IMR-90 (cell line): ENCODE measurements at regions of chr13 and their contacts with region 1.

Region 1: DNA sequence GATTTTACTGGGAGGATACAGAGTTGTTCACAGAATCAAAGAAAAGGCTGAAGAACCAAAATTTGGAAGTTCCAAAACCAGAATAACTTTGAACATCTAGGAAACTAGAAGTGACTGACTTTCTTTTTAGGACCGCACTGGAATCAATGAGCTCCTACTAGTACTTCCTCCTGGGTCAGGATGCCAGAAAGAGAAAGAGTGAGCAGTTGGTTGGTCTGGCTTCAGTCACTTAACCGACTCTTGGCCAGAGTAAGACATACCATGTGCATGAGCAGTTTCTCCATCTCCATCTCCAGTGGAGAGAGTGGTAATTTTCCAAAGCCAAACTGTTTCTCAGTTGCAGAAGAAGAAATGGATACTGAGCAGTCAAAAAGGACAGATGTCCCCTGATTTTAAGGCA is 27.1 kb upstream of the MTUS2 start:
- DNase-seq: peak; percentile 79
- ATAC-seq: peak; percentile 77
- H3K4me3 ChIP-seq: no peak overlapping the region
- H3K27ac ChIP-seq: no peak overlapping the region
- H3K4me1 ChIP-seq: no peaks in the 10 kb centered on the region
- H3K27me3 ChIP-seq: peaks cover 23% of the 10 kb centered on the region
- CTCF ChIP-seq: no peak
- POLR2A ChIP-seq: no peak
- RAD21 ChIP-seq: no peak

Region 2: DNA sequence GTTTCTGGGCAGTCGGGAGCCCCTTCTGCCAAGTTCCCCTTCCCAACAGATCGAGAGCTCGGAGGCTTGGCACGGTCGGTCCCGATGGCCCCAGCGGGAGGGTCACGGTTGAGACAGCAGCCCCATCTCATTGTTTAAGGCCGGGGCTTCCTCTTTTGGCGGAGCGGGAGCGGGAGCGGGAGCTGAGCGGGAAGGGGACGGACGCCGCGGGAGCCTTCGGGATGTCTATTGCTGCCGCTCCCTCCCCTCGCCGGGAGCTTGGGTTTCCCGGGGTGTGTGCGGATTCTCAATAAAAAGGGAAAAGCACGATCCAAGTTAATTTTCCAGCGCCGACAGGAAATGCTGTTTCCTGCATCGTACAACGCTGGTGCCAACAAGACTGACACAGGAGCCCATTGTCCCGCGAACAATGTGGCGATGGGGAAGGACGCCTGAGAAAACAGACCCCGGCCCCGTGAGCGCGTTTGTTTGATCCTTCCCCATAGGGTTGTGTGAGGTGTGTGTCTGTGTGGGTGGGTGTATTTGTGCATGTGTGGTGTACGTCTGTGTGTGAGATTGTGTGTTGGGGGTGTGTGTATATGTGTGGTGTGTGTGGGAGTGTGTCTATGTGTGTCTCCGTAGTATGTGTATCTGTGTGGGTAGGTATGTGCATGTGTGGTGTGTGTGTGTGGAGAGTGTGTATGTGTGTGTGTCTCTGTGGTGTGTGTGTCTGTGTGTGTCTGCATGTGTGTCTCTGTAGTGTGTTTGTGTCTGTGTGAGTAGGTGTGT is 261.7 kb before region 1 on chr13:
- CTCF ChIA-PET with region 1: no interaction called
- POLR2A ChIA-PET with region 1: no interaction called
- dilution Hi-C with region 1: no loop called
- in situ Hi-C with region 1: no loop called
- intact Hi-C with region 1: loop called (anchors 10 kb)
- DNase-seq: peak; percentile 30
- ATAC-seq: peak; percentile 27
- H3K4me3 ChIP-seq: peak overlapping the region; percentile 37
- H3K27ac ChIP-seq: no peak overlapping the region
- H3K4me1 ChIP-seq: peaks cover 11% of the 10 kb centered on the region
- H3K27me3 ChIP-seq: peaks cover 3% of the 10 kb centered on the region; the same call in 1 of the 2 replicates
- CTCF ChIP-seq: no peak
- POLR2A ChIP-seq: no peak
- RAD21 ChIP-seq: no peak

Region 3: DNA sequence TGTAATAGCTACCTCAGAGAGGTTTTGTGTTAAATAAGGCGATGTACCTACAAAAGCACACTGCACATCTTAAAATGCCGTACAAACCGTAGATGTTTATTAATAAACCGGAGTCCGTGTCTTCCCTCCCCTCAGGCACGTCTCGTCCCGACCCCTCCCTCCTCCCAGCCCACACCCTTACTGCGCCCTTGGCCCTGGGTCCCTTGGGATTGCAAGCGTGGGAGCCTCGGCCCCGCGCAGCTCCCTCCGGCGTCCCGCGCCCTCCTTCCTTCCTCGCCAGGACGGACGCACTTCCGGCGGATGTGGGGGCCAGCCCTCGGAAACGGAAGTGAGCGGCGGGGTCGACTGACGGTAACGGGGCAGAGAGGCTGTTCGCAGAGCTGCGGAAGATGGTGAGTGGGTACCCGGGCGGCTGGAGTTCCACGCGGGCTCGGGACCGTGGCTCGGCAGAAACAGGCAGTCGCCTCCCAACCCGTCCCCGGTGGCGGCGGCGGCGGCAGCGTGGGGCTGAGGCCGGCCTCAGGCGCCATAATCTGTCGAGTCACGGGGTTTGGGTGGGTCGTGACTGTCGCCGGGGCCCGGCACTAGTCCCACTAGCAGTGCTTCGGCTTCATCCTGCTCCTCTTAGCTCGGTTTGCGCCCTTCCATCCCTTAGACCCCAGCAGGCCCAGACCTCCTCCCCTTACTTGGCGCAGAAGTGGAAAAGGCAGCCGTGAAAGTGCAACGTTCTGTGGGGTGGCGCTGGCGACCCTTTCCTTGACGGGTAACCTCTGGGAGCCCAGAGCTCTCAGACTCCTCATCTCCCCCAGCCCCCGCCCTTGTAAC is 134.0 kb before region 1 on chr13 and contains the start of gene POMP:
- CTCF ChIA-PET with region 1: no interaction called
- POLR2A ChIA-PET with region 1: interaction called, 19 read pairs
- dilution Hi-C with region 1: no loop called
- in situ Hi-C with region 1: no loop called
- intact Hi-C with region 1: no loop called
- DNase-seq: peak; percentile 95
- ATAC-seq: peak; percentile 80
- H3K4me3 ChIP-seq: peak within 1 kb of the TSS; percentile 93
- H3K27ac ChIP-seq: peak within 1 kb of the TSS; percentile 90
- H3K4me1 ChIP-seq: peaks cover 8% of the 10 kb centered on the region
- H3K27me3 ChIP-seq: no peaks in the 10 kb centered on the region
- CTCF ChIP-seq: no peak
- POLR2A ChIP-seq: peak; percentile 97
- RAD21 ChIP-seq: peak; percentile 25; the same call in 1 of the 2 replicates
- total RNA-seq, gene POMP: 60.2 and 117 TPM in 2 replicates

Region 4: GRCh38 chr13:28679628-28680027 is 113.4 kb before region 1 on chr13:
- CTCF ChIA-PET with region 1: interaction called, 5 read pairs
- POLR2A ChIA-PET with region 1: no interaction called
- dilution Hi-C with region 1: no loop called
- in situ Hi-C with region 1: loop called (anchors 5 kb)
- intact Hi-C with region 1: loop called (anchors 1 kb)
- DNase-seq: peak; percentile 31
- ATAC-seq: peak; percentile 71
- H3K4me3 ChIP-seq: no peak overlapping the region
- H3K27ac ChIP-seq: no peak overlapping the region
- H3K4me1 ChIP-seq: no peaks in the 10 kb centered on the region
- H3K27me3 ChIP-seq: no peaks in the 10 kb centered on the region
- CTCF ChIP-seq: peak; percentile 53
- POLR2A ChIP-seq: no peak
- RAD21 ChIP-seq: peak; percentile 44; the same call in 1 of the 2 replicates

Region 5: GRCh38 chr13:28718543-28719226 is 74.3 kb before region 1 on chr13 and contains the start of gene SLC46A3:
- CTCF ChIA-PET with region 1: no interaction called
- POLR2A ChIA-PET with region 1: no interaction called
- dilution Hi-C with region 1: no loop called
- in situ Hi-C with region 1: no loop called
- intact Hi-C with region 1: loop called (anchors 2 kb)
- DNase-seq: peak; percentile 98
- ATAC-seq: peak; percentile 99
- H3K4me3 ChIP-seq: peak within 1 kb of the TSS; percentile 63
- H3K27ac ChIP-seq: peak within 1 kb of the TSS; percentile 44
- H3K4me1 ChIP-seq: peaks cover 12% of the 10 kb centered on the region
- H3K27me3 ChIP-seq: no peaks in the 10 kb centered on the region
- CTCF ChIP-seq: peak; percentile 20; the same call in 1 of the 2 replicates
- POLR2A ChIP-seq: peak; percentile 61; the same call in 1 of the 2 replicates
- RAD21 ChIP-seq: no peak
- total RNA-seq, gene SLC46A3: 0.54 and 0.83 TPM in 2 replicates

Region 6: DNA sequence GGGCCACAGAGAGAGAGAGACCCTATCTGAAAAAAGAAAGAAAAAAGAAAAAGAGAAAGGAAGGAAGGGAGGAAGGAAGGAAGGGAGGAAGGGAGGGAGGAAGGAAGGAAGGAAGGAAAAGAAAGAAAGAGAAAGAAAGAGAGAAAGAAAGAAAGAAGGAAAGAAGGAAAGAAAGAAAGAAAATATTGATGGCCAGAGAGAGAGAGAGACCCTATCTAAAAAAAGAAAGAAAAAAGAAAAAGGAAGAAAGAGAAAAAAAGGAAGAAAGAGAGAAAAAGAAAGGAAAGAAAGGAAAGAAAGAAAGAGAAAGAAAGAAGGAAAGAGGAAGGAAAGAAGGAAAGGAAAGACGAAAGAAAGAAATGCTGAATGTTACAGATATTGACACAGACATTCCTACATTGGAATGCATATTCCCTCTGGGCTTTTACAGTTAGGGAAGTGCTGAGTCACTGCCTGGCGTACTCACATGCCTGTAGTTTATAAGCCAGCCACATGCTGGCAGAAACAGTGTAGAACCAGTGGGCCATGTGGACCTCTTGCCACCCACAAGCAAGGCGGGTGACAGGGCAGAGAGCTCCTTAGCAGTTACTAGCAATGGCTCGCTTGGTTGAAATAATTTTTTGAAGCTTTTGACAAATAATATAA is 39.6 kb before region 1 on chr13:
- CTCF ChIA-PET with region 1: interaction called, 3 read pairs
- POLR2A ChIA-PET with region 1: no interaction called
- dilution Hi-C with region 1: no loop called
- in situ Hi-C with region 1: no loop called
- intact Hi-C with region 1: loop called (anchors 5 kb)
- DNase-seq: peak; percentile 91
- ATAC-seq: peak; percentile 99
- H3K4me3 ChIP-seq: no peak overlapping the region
- H3K27ac ChIP-seq: peak overlapping the region; percentile 84; the same call in 1 of the 2 replicates
- H3K4me1 ChIP-seq: peaks cover 6% of the 10 kb centered on the region
- H3K27me3 ChIP-seq: no peaks in the 10 kb centered on the region
- CTCF ChIP-seq: 0 out of 2 replicates have a peak, but pooled peaks have one; percentile 13
- POLR2A ChIP-seq: no peak
- RAD21 ChIP-seq: peak; percentile 22; the same call in 1 of the 2 replicates